ENCODE measurements at regions of chr4 and their contacts with region 1.

Region 1: DNA sequence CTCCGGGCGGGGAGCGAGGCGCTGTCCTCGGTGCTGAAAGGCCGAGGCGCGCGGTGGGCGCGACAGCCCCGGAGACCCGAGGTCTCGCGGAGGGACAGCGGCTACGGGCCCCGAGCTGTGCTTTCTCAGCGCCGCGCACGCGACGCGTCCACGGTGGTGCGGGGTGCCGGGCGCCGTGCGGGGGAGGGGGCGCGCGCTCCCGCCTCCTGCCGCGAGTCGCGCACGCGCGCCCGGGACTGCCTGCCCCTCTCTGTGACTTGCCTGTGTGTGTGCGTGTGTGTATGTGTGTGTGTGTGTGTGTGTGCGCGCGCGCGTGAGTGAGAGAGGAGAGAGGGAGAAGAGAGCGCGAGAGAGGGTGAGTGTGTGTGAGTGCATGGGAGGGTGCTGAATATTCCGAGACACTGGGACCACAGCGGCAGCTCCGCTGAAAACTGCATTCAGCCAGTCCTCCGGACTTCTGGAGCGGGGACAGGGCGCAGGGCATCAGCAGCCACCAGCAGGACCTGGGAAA is at the start of gene GRIA2:
- DNase-seq: peak; percentile 70
- H3K4me3 ChIP-seq: peak within 1 kb of the TSS; percentile 66
- H3K27ac ChIP-seq: no peak within 1 kb of the TSS
- H3K4me1 ChIP-seq: no peaks in the 10 kb centered on the region
- H3K27me3 ChIP-seq: peaks cover 63% of the 10 kb centered on the region
- total RNA-seq, gene GRIA2: not detected in 2 replicates

Region 2: GRCh38 chr4:158172261-158173258 is 952.1 kb after region 1 on chr4 and contains the start of gene GASK1B:
- in situ Hi-C with region 1: loop called (anchors 25 kb)
- DNase-seq: peak; percentile 75
- H3K4me3 ChIP-seq: peak within 1 kb of the TSS; percentile 74
- H3K27ac ChIP-seq: no peak within 1 kb of the TSS
- H3K4me1 ChIP-seq: peaks cover 36% of the 10 kb centered on the region
- H3K27me3 ChIP-seq: no peaks in the 10 kb centered on the region
- total RNA-seq, gene GASK1B: 4.8 and 6.2 TPM in 2 replicates

Measured in GM23248 (cell line).